Dendritic cell treated with granulocyte-macrophage colony-stimulating factor and Interleukin-4, amounts not matched to agents 40 ng/mL and 50 ng/mL, for 4 days (primary cell): ENCODE measurements at regions of chr17 and their contacts with region 1.

Region 1: DNA sequence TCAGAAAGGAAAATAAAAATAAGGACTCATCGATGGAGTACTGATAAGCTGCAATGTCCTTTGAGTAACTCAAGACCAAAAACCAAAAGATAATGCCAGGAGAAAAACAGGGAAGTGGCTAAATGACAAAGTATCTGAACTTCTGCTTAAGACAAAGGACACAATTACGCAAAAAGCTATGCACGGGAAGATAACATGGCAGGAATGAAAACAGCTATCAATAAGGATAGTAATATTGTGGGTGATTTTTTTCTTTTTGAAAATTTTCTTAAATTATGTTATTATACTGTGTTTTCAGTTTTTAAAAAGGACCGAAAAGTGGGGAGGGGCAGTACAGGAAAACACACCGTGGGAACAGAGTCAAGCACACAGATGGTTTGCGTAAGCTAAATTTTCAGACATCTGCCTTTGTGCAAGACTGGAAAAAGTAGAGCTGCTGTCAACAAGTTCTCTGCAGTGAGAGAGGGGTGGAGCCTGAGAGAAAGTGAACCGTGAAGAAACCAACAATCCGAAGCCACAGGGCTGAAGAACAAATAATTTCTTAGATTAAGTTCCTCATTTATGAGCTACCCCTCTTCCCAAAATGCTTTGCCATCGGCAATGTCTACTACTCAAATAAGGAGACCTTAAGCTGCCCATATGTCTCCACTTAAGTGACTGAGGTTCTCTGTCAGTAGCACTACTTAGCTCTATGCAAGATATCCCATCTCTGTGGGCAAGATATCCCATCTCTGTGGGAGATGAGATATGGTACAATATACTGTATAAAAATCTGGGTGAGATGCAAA is 99.9 kb upstream of the CORO6 start:
- H3K4me3 Mint-ChIP-seq: peak overlapping the region; percentile 58
- H3K27ac Mint-ChIP-seq: peak overlapping the region; percentile 89
- H3K4me1 Mint-ChIP-seq: peaks cover 71% of the 10 kb centered on the region
- H3K27me3 Mint-ChIP-seq: no peaks in the 10 kb centered on the region

Region 2: GRCh38 chr17:29677221-29677791 is 45.3 kb before region 1 on chr17:
- intact Hi-C with region 1: no loop called
- H3K4me3 Mint-ChIP-seq: no peak overlapping the region
- H3K27ac Mint-ChIP-seq: peak overlapping the region; percentile 66
- H3K4me1 Mint-ChIP-seq: peaks cover 20% of the 10 kb centered on the region
- H3K27me3 Mint-ChIP-seq: no peaks in the 10 kb centered on the region

Region 3: GRCh38 chr17:29707212-29707571 is 15.4 kb before region 1 on chr17:
- intact Hi-C with region 1: loop called (anchors 2 kb)
- H3K4me3 Mint-ChIP-seq: peak overlapping the region; percentile 82
- H3K27ac Mint-ChIP-seq: peak overlapping the region; percentile 99
- H3K4me1 Mint-ChIP-seq: peaks cover 43% of the 10 kb centered on the region
- H3K27me3 Mint-ChIP-seq: no peaks in the 10 kb centered on the region

Region 4: GRCh38 chr17:29753845-29754439 is 31.3 kb after region 1 on chr17:
- intact Hi-C with region 1: no loop called
- H3K4me3 Mint-ChIP-seq: no peak overlapping the region
- H3K27ac Mint-ChIP-seq: no peak overlapping the region
- H3K4me1 Mint-ChIP-seq: peaks cover 12% of the 10 kb centered on the region
- H3K27me3 Mint-ChIP-seq: no peaks in the 10 kb centered on the region

Region 5: DNA sequence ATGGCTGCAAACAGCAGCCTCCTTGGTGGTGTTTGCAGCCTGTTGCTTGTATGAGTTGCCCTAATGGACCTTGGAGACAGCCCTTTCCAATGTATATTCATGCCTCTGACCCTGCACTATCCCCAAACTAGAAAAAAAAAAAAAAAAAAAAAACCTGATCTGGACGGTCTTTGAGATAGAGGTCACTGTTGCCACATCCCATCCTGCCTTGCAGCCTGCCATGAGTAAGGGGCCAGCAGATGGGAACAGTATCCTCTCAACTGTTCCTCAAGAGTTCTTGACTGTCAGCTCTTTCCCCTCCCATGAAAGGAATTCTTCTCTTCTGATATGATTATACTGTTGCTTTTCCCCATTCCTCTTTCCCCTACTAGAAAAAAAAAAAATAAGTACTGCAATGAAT is 55.1 kb after region 1 on chr17:
- intact Hi-C with region 1: no loop called
- H3K4me3 Mint-ChIP-seq: no peak overlapping the region
- H3K27ac Mint-ChIP-seq: no peak overlapping the region
- H3K4me1 Mint-ChIP-seq: peaks cover 6% of the 10 kb centered on the region
- H3K27me3 Mint-ChIP-seq: no peaks in the 10 kb centered on the region